ENCODE measurements at regions of chr6 and their contacts with region 1.

Region 1: GRCh38 chr6:113909234-113909856 is 52.2 kb downstream of the MARCKS start:
- DNase-seq: peak; percentile 63
- H3K4me3 ChIP-seq: no peak overlapping the region
- H3K27ac ChIP-seq: no peak overlapping the region
- H3K27me3 ChIP-seq: no peaks in the 10 kb centered on the region
- CTCF ChIP-seq: peak; percentile 58

Region 2: GRCh38 chr6:113476937-113477839 is 432.2 kb before region 1 on chr6:
- CTCF ChIA-PET with region 1: no interaction called
- POLR2A ChIA-PET with region 1: no interaction called
- DNase-seq: no peak
- H3K4me3 ChIP-seq: no peak overlapping the region
- H3K27ac ChIP-seq: no peak overlapping the region
- H3K27me3 ChIP-seq: no peaks in the 10 kb centered on the region
- CTCF ChIP-seq: no peak

Region 3: GRCh38 chr6:113540466-113540865 is 368.9 kb before region 1 on chr6:
- CTCF ChIA-PET with region 1: no interaction called
- POLR2A ChIA-PET with region 1: no interaction called
- DNase-seq: no peak
- H3K4me3 ChIP-seq: no peak overlapping the region
- H3K27ac ChIP-seq: no peak overlapping the region
- H3K27me3 ChIP-seq: no peaks in the 10 kb centered on the region
- CTCF ChIP-seq: no peak

Region 4: DNA sequence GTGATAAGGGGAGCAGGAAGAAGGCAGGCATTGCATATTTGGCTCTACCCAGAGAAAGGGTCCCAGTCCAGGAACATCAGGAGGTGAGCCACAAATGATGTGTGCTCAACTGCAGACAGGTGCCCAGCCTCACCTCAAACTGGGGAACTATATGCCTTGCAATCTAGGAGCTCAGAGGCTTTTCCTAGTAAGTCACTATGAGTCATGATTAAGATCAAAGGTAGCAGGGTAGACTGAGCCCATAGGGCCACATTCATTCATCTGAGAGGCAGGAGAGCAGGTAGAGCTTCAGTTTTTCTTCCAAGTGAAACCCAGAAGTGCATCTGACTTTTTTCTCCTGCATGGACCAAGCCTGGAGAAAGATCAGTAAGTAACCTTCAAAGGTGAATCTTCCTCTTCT is 20.9 kb before region 1 on chr6:
- CTCF ChIA-PET with region 1: interaction called, 13 read pairs
- POLR2A ChIA-PET with region 1: no interaction called
- DNase-seq: no peak
- H3K4me3 ChIP-seq: no peak overlapping the region
- H3K27ac ChIP-seq: no peak overlapping the region
- H3K27me3 ChIP-seq: no peaks in the 10 kb centered on the region
- CTCF ChIP-seq: no peak

Region 5: DNA sequence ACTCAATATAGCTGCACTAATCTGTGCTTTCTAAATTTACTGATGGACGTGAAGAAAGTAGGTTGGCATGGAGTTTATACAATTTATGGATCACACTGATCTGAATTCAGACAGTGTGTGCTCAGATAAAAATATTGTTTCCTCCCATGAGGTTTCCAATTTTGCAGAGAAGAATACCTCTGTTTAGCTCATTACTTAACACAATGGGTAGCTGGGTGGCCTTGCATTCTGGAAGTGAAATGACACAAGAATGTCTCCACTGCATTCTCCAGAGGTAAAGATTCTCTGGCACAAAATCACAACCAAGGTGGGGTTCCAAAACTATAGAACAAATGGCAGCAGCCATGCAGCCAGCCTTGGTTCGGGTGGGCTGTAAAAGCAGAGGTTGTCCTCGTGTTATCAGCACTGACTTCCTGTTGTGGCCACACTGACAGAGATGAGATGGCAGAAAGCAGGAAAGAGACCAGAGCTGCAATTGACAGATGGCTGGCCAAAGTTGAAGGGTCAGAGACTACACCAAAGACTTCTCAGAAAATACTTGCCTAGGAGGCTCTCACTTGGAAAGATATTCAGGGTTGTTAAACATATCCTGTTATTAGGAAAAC is 11.4 kb after region 1 on chr6:
- CTCF ChIA-PET with region 1: interaction called, 17 read pairs
- POLR2A ChIA-PET with region 1: no interaction called
- DNase-seq: no peak
- H3K4me3 ChIP-seq: no peak overlapping the region
- H3K27ac ChIP-seq: no peak overlapping the region
- H3K27me3 ChIP-seq: no peaks in the 10 kb centered on the region
- CTCF ChIP-seq: no peak

Region 6: DNA sequence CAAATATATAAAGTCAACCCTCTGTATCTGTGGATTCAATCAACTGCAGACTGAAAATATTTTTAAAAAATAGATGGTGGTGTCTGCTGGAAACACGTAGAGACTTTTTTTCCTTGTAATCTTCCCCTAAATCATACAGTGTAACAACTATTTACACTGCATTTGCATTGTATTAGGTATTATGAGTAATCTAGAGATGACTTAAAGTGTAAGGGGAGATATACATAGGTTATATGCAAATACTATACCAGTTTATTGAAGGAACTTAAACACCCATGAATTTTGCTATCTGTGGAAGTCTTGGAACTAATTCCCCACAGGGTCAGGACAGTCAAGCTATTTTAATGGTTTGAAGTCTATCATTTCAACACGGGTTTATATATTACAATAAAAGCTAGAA is 51.5 kb after region 1 on chr6:
- CTCF ChIA-PET with region 1: no interaction called
- POLR2A ChIA-PET with region 1: no interaction called
- DNase-seq: no peak
- H3K4me3 ChIP-seq: no peak overlapping the region
- H3K27ac ChIP-seq: no peak overlapping the region
- H3K27me3 ChIP-seq: no peaks in the 10 kb centered on the region
- CTCF ChIP-seq: no peak